ENCODE measurements at regions of chr4 and their contacts with region 1.

Region 1: GRCh38 chr4:85180533-85180932 is 214.0 kb upstream of the WDFY3 start:
- DNase-seq: no peak
- H3K4me3 ChIP-seq: no peak overlapping the region
- H3K27ac ChIP-seq: no peak overlapping the region
- H3K4me1 ChIP-seq: no peaks in the 10 kb centered on the region
- H3K27me3 ChIP-seq: no peaks in the 10 kb centered on the region
- CTCF ChIP-seq: no peak
- POLR2A ChIP-seq: no peak

Region 2: DNA sequence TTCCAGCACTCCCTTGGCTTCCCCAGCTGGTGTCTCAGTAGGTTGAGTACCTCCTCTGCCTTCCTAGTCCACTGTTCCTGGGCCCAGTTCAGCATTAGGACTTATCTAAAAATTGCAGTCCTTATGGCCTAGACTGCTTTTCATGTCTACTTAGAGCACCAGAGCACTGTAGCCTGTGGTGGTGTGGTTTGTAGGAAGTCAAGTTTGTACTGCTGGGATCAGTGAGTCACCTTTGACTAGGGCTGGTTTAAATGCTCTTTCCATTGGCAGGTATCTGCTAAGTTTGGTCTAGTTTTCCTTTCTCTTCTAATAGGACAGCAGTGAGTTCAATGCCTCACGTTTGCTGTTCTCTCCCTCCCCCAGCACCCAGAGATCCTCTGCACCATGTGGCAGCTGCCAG is 19.6 kb after region 1 on chr4:
- intact Hi-C with region 1: loop called (anchors 2 kb)
- DNase-seq: no peak
- H3K4me3 ChIP-seq: no peak overlapping the region
- H3K27ac ChIP-seq: no peak overlapping the region
- H3K4me1 ChIP-seq: no peaks in the 10 kb centered on the region
- H3K27me3 ChIP-seq: no peaks in the 10 kb centered on the region
- CTCF ChIP-seq: no peak
- POLR2A ChIP-seq: no peak

Region 3: GRCh38 chr4:86421461-86421860 is 1240.9 kb after region 1 on chr4:
- intact Hi-C with region 1: loop called (anchors 5 kb)
- DNase-seq: no peak
- H3K4me3 ChIP-seq: no peak overlapping the region
- H3K27ac ChIP-seq: no peak overlapping the region
- H3K4me1 ChIP-seq: no peaks in the 10 kb centered on the region
- H3K27me3 ChIP-seq: no peaks in the 10 kb centered on the region
- CTCF ChIP-seq: no peak
- POLR2A ChIP-seq: no peak

Measured in breast epithelium (tissue), 4 donors.